SK-N-SH (cell line): ENCODE measurements at regions of chr17 and their contacts with region 1.

Region 1: DNA sequence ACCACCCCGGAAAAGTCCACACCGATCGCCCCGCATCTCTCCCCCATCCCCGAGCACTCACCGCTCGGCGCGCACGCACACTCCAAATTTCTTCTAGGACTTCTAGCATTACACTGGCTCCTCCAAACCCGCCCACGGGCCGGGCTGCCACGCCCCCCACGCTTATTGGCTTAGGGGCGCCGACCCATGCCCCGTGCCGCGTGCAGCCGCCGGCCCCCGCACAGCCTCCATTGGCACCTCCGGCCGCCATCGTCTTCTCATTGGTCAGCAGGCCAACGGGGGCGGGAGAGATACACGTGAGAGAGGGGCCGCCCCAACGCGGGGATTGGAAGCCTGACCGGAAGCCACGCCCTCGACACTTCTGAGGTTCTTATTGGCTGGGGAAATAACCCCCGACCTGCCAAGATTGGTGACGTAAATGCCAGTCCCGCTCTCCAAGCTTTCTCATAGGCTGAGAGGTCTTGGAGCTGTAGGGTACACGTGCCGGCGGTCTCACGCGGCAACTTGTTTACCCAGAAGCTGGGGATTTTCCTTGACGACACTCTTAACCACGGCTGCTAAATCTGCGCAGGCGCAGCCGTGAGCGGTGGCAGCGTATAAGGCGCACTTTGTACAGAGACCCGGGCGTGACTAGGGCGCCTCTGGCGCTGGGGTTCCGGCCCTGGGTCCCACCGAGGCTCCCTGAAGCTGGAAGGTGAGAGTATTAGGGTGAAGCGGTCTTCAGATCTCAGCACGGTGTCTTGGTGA is 4.2 kb upstream of the PER1 start:
- DNase-seq: peak; percentile 92
- H3K4me3 ChIP-seq: peak overlapping the region; percentile 54 to 78
- H3K27ac ChIP-seq: peak overlapping the region; percentile 91 to 95
- H3K4me1 ChIP-seq: peaks cover 36 to 47% of the 10 kb centered on the region in 2 experiments; a peak in 3 of 4 replicates
- H3K27me3 ChIP-seq: no peaks in the 10 kb centered on the region
- CTCF ChIP-seq: no peak; the same call in 1 of the 2 replicates
- EP300 ChIP-seq: no peak
- RAD21 ChIP-seq: 0 out of 2 replicates have a peak, but pooled peaks have one; percentile 30

Region 2: GRCh38 chr17:7989781-7990655 is 166.4 kb before region 1 on chr17:
- CTCF ChIA-PET with region 1: no interaction called
- POLR2A ChIA-PET with region 1: no interaction called
- DNase-seq: peak; percentile 93
- H3K4me3 ChIP-seq: peak overlapping the region; percentile 57 to 72
- H3K27ac ChIP-seq: peak overlapping the region in 1 of 2 experiments; percentile 47; a peak in 1 of 4 replicates
- H3K4me1 ChIP-seq: peaks cover 0 to 4% of the 10 kb centered on the region in 2 experiments; a peak in 1 of 4 replicates
- H3K27me3 ChIP-seq: no peaks in the 10 kb centered on the region
- CTCF ChIP-seq: peak; percentile 93
- EP300 ChIP-seq: no peak; a peak in 1 of 4 replicates
- RAD21 ChIP-seq: peak; percentile 59

Region 3: GRCh38 chr17:8048236-8048635 is 108.2 kb before region 1 on chr17:
- CTCF ChIA-PET with region 1: no interaction called
- POLR2A ChIA-PET with region 1: no interaction called
- DNase-seq: no peak
- H3K4me3 ChIP-seq: no peak overlapping the region
- H3K27ac ChIP-seq: no peak overlapping the region
- H3K4me1 ChIP-seq: no peaks in the 10 kb centered on the region
- H3K27me3 ChIP-seq: peaks cover 10% of the 10 kb centered on the region
- CTCF ChIP-seq: no peak
- EP300 ChIP-seq: no peak
- RAD21 ChIP-seq: no peak

Region 4: GRCh38 chr17:8125157-8125946 is 31.1 kb before region 1 on chr17:
- CTCF ChIA-PET with region 1: interaction called, 16 read pairs
- POLR2A ChIA-PET with region 1: interaction called, 5 read pairs
- DNase-seq: peak; percentile 88
- H3K4me3 ChIP-seq: peak overlapping the region; percentile 53 to 81
- H3K27ac ChIP-seq: peak overlapping the region; percentile 17 to 54; a peak in 2 of 4 replicates
- H3K4me1 ChIP-seq: peaks cover 0 to 32% of the 10 kb centered on the region in 2 experiments; a peak in 1 of 4 replicates
- H3K27me3 ChIP-seq: no peaks in the 10 kb centered on the region; the same call in 1 of the 2 replicates
- CTCF ChIP-seq: no peak
- EP300 ChIP-seq: no peak
- RAD21 ChIP-seq: no peak

Region 5: GRCh38 chr17:8138672-8139371 is 17.6 kb before region 1 on chr17:
- CTCF ChIA-PET with region 1: interaction called, 98 read pairs
- POLR2A ChIA-PET with region 1: interaction called, 19 read pairs
- DNase-seq: peak; percentile 94
- H3K4me3 ChIP-seq: peak overlapping the region; percentile 57 to 62
- H3K27ac ChIP-seq: peak overlapping the region; percentile 77 to 78
- H3K4me1 ChIP-seq: peaks cover 0 to 5% of the 10 kb centered on the region in 2 experiments; a peak in 1 of 4 replicates
- H3K27me3 ChIP-seq: no peaks in the 10 kb centered on the region
- CTCF ChIP-seq: peak; percentile 91
- EP300 ChIP-seq: peak in 1 of 2 experiments; percentile 24; a peak in 1 of 4 replicates
- RAD21 ChIP-seq: peak; percentile 78

Region 6: GRCh38 chr17:8173056-8173870 is 16.8 kb after region 1 on chr17:
- CTCF ChIA-PET with region 1: interaction called, 9 read pairs
- POLR2A ChIA-PET with region 1: interaction called, 13 read pairs
- DNase-seq: peak; percentile 77
- H3K4me3 ChIP-seq: peak overlapping the region; percentile 38 to 54
- H3K27ac ChIP-seq: peak overlapping the region; percentile 97 to 98
- H3K4me1 ChIP-seq: peaks cover 6 to 28% of the 10 kb centered on the region in 2 experiments; a peak in 2 of 4 replicates
- H3K27me3 ChIP-seq: no peaks in the 10 kb centered on the region
- CTCF ChIP-seq: no peak
- EP300 ChIP-seq: peak; percentile 57 to 58
- RAD21 ChIP-seq: no peak

Region 7: DNA sequence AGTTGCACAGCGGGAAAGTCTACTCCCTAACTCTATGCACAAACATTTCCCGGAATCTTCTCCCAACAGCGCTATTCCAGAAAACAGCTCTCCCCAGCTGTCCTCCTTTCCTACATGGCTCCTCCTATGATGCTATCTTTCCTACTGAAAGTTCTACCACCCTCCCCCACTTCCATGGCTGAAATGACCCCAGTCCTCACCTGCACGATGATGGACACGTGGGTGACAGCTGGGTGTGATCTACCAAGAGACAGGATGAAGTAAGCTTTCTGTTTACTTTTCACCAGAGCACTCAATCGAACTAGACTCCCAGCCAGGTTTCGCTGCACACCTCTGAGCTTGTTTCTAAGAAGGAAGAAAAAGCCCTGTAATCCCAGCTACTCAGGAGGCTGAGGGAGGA is 80.8 kb after region 1 on chr17:
- CTCF ChIA-PET with region 1: no interaction called
- POLR2A ChIA-PET with region 1: no interaction called
- DNase-seq: no peak
- H3K4me3 ChIP-seq: no peak overlapping the region
- H3K27ac ChIP-seq: no peak overlapping the region
- H3K4me1 ChIP-seq: no peaks in the 10 kb centered on the region
- H3K27me3 ChIP-seq: no peaks in the 10 kb centered on the region
- CTCF ChIP-seq: no peak
- EP300 ChIP-seq: no peak
- RAD21 ChIP-seq: no peak